Left colon (tissue), 2 donors: ENCODE measurements at regions of chr3 and their contacts with region 1.

Region 1: DNA sequence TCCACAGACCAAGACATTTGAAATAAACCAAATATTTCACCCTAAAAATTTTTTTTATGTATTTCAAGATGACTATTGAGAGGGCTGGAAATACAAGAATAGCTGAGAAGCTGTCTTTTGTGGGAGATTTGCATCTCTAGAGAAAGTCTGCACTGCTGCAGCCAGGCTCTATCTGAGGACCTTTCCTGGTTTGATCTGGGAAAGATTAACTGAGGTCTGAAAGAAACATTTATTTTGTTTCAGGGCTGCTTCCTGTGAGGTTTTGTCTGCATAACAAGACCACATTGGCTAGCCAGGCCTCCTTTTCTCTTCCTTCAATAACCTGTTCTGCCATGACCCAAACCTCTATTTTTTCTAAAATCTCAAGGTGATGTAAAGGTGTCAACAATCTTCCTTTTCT is 117.5 kb upstream of the ARHGEF26 start:
- DNase-seq: no peak
- ATAC-seq: no peak

Region 2: DNA sequence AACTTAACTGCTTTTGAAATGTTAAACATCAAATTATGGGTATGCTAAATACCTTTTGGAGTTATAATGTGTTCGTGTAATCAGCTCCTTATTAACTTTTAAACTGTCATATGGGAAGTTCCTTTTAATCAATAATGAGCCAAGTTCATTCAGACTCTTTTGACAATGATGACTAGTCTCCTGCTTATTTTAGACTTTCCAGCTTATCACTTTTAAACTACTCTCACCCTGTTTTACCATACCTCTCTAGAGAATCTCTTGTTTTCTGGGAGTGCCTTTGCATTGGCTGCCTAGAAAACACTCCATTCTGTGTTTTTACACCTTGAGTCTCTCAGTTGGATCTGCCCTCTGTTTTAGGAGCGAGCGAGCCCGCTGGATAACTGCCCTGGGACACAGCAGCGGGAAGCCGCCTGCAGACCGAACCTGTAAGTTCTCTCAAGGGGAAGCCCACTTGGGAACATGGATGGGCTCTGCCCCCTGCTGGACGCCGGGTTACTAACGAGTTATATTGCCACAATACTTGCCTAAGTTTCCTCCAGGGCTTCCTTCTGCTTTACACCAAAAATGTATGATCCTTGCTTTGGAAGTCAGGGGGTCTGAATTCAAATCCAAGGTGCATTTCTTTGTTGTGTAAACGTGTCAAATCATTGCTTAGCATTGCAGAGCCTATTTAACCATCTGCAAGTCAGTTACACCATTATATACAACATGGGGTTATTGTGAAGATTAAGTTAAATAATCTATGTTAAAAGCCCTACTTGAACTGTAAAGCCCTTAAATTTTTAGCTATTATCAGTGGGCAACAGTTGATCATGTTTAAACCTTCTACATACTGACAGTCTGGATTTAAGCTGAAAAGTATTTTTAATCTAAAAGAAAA is 249.3 kb after region 1 on chr3:
- intact Hi-C with region 1: loop called in 1 of 2 experiments (anchors 10 kb)
- DNase-seq: peak; percentile 83 to 95
- ATAC-seq: peak; percentile 99